A673 (cell line): ENCODE measurements at regions of chr2 and their contacts with region 1.

Region 1: DNA sequence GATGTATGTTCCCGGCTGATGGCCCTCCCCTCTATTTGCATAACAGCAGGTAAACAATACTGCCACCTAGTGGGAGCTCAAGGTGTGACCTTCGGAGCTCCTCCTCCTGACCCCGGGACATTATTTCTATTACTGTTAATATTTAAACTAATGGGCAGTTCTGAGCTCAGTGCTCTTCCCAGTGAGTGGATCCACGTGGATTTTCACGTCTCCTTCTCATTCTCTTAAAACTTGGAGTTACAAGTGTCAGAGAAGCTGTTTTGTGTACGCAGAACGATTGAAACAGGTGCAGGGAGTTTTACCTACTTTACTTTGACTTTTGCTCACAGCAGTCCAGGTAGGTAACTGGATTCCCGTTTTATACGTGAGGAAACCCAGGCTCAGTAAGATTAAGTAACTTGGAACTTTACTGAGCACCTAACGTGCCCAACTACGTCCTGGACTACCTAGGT is 127.3 kb downstream of the PRKCE start:
- DNase-seq: peak; percentile 72
- H3K4me3 ChIP-seq: no peak overlapping the region
- H3K27ac ChIP-seq: no peak overlapping the region
- H3K4me1 ChIP-seq: no peaks in the 10 kb centered on the region
- H3K27me3 ChIP-seq: no peaks in the 10 kb centered on the region
- CTCF ChIP-seq: peak; percentile 75

Region 2: GRCh38 chr2:45643543-45644542 is 134.9 kb before region 1 on chr2:
- CTCF ChIA-PET with region 1: interaction called, 5 read pairs
- POLR2A ChIA-PET with region 1: no interaction called
- intact Hi-C with region 1: loop called (anchors 1 kb)
- DNase-seq: peak; percentile 75
- H3K4me3 ChIP-seq: peak overlapping the region; percentile 55
- H3K27ac ChIP-seq: no peak overlapping the region
- H3K4me1 ChIP-seq: no peaks in the 10 kb centered on the region
- H3K27me3 ChIP-seq: peaks cover 22% of the 10 kb centered on the region
- CTCF ChIP-seq: peak; percentile 77

Region 3: DNA sequence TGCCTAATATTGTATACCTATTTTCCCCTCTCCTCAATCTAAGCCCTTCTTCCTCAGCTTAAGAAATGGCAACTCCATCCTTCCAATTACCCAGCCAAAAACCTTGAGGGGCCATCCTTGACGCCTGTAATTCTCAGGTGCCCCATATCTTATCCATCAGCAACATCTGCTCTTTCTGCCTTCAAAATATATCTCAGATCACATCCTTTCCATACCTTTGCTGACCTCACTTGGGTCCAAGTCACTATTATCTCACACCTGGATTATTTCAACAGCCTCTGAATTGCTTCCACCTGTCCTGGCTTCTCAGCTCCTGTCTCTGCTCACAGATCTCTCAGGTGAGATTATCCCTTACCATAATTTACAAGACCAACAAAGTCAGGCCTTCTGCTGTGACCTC is 119.6 kb before region 1 on chr2:
- CTCF ChIA-PET with region 1: no interaction called
- POLR2A ChIA-PET with region 1: no interaction called
- intact Hi-C with region 1: loop called (anchors 5 kb)
- DNase-seq: no peak
- H3K4me3 ChIP-seq: no peak overlapping the region
- H3K27ac ChIP-seq: no peak overlapping the region
- H3K4me1 ChIP-seq: no peaks in the 10 kb centered on the region
- H3K27me3 ChIP-seq: no peaks in the 10 kb centered on the region
- CTCF ChIP-seq: no peak

Region 4: GRCh38 chr2:45935791-45936622 is 157.3 kb after region 1 on chr2:
- CTCF ChIA-PET with region 1: interaction called, 5 read pairs
- POLR2A ChIA-PET with region 1: no interaction called
- intact Hi-C with region 1: loop called (anchors 1 kb)
- DNase-seq: peak; percentile 85
- H3K4me3 ChIP-seq: no peak overlapping the region
- H3K27ac ChIP-seq: no peak overlapping the region
- H3K4me1 ChIP-seq: peaks cover 14% of the 10 kb centered on the region
- H3K27me3 ChIP-seq: no peaks in the 10 kb centered on the region
- CTCF ChIP-seq: peak; percentile 78

Region 5: DNA sequence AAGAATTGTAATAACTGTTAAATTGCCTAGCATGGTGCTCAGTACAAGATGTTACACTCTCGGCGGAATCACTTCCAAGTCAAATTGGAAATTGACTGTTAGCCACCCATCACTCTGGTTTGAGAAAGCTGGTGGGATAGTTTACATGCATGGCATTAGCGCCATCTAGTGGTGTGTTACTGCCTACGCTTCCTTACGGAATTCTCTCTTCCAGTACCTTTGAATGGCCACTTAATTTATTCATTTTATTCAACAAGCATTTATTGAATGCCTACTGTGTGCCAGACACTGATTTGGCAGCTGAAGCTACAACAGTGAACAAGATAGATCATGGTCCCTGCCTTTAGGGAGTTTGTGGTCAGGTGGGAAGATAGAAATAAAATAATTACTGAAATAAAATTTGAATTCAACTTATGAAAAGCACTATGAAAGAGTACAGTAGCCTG is 871.8 kb after region 1 on chr2:
- CTCF ChIA-PET with region 1: no interaction called
- POLR2A ChIA-PET with region 1: no interaction called
- intact Hi-C with region 1: no loop called
- DNase-seq: peak; percentile 86
- H3K4me3 ChIP-seq: no peak overlapping the region
- H3K27ac ChIP-seq: no peak overlapping the region
- H3K4me1 ChIP-seq: peaks cover 6% of the 10 kb centered on the region
- H3K27me3 ChIP-seq: no peaks in the 10 kb centered on the region
- CTCF ChIP-seq: peak; percentile 92

Region 6: GRCh38 chr2:47165001-47165555 is 1386.3 kb after region 1 on chr2:
- CTCF ChIA-PET with region 1: no interaction called
- POLR2A ChIA-PET with region 1: no interaction called
- intact Hi-C with region 1: no loop called
- DNase-seq: no peak
- H3K4me3 ChIP-seq: no peak overlapping the region
- H3K27ac ChIP-seq: no peak overlapping the region
- H3K4me1 ChIP-seq: no peaks in the 10 kb centered on the region
- H3K27me3 ChIP-seq: no peaks in the 10 kb centered on the region
- CTCF ChIP-seq: no peak